HepG2 (cell line): ENCODE measurements at regions of chr1 and their contacts with region 1.

Region 1: DNA sequence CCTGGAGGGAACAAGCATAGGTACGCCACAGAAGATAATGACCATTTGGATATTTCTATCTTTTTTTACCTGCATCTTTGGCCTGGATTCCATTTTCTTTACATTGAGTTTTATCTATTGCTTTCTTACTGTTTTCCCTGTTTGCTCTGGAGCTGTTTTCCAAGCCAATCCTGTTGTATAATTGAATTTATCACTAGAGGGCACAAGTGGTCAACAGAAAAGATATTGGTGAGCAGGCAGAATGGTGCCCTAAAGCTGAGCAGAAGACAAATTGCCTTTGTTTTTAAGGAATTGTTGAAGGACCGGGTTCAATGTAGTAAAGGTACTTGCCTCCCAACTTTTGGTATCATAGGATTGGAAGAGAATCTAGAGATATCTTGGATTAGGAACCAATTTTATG is 152.8 kb downstream of the PPP1R12B start:
- DNase-seq: peak; percentile 31
- ATAC-seq: peak; percentile 71
- H3K4me3 ChIP-seq: no peak overlapping the region
- H3K27ac ChIP-seq: no peak overlapping the region
- H3K4me1 ChIP-seq: no peaks in the 10 kb centered on the region
- H3K27me3 ChIP-seq: no peaks in the 10 kb centered on the region
- CTCF ChIP-seq: peak; percentile 68
- EP300 ChIP-seq: no peak
- POLR2A ChIP-seq: no peak
- RAD21 ChIP-seq: peak; percentile 44; the same call in 1 of the 2 replicates

Region 2: DNA sequence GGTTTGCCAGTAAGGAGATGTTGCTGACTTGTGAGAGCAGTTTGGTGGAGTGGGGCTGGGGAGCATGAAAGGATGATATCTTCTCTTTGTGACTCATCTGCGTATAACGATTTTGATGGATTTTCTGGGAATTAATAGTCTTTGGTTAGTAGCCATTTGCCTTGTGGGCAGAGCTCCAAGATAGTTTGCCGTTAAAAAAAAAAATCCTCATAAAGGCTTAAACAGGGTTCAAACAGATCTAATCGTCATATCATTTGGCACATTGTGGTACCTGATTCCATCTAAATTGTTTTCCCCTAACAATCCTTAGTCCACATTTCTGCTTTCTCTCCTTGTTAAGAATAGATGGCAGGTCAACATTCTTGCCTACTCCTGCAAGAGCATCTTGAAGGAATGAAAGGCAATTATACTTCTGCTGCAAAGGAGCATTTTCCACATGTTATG is 15.2 kb after region 1 on chr1:
- CTCF ChIA-PET with region 1: no interaction called
- POLR2A ChIA-PET with region 1: no interaction called
- in situ Hi-C with region 1: no loop called
- intact Hi-C with region 1: no loop called
- DNase-seq: no peak
- ATAC-seq: no peak
- H3K4me3 ChIP-seq: no peak overlapping the region
- H3K27ac ChIP-seq: no peak overlapping the region
- H3K4me1 ChIP-seq: peaks cover 10% of the 10 kb centered on the region
- H3K27me3 ChIP-seq: no peaks in the 10 kb centered on the region
- CTCF ChIP-seq: no peak
- EP300 ChIP-seq: no peak
- POLR2A ChIP-seq: no peak
- RAD21 ChIP-seq: no peak

Region 3: GRCh38 chr1:202531472-202531811 is 30.2 kb after region 1 on chr1:
- CTCF ChIA-PET with region 1: no interaction called
- POLR2A ChIA-PET with region 1: no interaction called
- in situ Hi-C with region 1: no loop called
- intact Hi-C with region 1: no loop called
- DNase-seq: no peak
- ATAC-seq: no peak
- H3K4me3 ChIP-seq: no peak overlapping the region
- H3K27ac ChIP-seq: no peak overlapping the region
- H3K4me1 ChIP-seq: no peaks in the 10 kb centered on the region
- H3K27me3 ChIP-seq: no peaks in the 10 kb centered on the region
- CTCF ChIP-seq: no peak
- EP300 ChIP-seq: no peak
- POLR2A ChIP-seq: no peak
- RAD21 ChIP-seq: no peak

Region 4: DNA sequence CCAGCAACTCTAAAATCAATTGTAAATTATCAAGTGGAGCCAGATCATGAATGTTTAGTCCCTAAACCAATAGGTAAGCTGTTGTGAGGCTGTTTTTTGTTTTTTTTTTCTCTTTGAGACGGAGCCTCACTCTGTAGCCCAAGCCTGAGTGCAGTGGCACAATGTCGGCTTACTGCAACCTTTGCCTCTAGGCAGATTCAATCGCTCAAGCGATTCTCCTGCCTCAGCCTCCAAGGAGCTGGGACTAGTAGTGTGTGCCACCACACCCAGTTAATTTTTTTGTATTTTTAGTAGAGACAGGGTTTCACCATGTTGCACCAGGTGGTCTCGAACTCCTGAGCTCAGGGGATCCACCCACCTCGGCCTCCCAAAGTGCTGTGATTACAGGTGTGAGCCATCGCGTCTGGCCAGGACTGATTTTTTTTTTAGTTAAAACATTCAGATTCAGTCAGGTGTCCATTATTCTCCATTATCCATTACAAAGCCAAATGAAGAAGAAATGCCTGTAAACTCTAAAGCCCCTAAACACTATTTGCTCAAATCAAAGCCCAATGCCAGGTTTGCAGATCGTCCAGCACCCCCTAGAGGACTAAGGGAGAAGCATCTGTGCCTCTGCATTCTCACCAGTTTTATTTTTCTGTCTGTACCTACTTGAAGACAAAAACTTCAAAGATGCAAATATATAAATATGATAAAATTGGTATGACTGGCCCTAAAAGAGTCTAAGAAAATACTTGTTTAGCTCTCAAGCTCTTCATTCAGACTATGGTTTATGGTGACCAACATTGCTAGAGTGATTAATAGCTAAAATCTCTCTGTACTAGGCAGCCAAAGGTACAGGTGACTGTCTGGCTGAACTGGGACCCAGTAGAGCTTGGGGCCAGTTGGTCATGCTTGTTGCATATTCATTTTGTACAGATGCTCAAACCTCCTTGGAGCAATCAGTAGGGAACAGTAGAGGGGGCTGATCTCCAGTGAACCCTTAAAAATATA is 70.4 kb after region 1 on chr1:
- CTCF ChIA-PET with region 1: interaction called, 11 read pairs
- POLR2A ChIA-PET with region 1: no interaction called
- in situ Hi-C with region 1: no loop called
- intact Hi-C with region 1: loop called (anchors 1 kb)
- DNase-seq: peak; percentile 26
- ATAC-seq: peak; percentile 69
- H3K4me3 ChIP-seq: no peak overlapping the region
- H3K27ac ChIP-seq: no peak overlapping the region
- H3K4me1 ChIP-seq: peaks cover 5% of the 10 kb centered on the region
- H3K27me3 ChIP-seq: no peaks in the 10 kb centered on the region
- CTCF ChIP-seq: peak; percentile 72
- EP300 ChIP-seq: no peak
- POLR2A ChIP-seq: no peak
- RAD21 ChIP-seq: peak; percentile 24; the same call in 1 of the 2 replicates

Region 5: DNA sequence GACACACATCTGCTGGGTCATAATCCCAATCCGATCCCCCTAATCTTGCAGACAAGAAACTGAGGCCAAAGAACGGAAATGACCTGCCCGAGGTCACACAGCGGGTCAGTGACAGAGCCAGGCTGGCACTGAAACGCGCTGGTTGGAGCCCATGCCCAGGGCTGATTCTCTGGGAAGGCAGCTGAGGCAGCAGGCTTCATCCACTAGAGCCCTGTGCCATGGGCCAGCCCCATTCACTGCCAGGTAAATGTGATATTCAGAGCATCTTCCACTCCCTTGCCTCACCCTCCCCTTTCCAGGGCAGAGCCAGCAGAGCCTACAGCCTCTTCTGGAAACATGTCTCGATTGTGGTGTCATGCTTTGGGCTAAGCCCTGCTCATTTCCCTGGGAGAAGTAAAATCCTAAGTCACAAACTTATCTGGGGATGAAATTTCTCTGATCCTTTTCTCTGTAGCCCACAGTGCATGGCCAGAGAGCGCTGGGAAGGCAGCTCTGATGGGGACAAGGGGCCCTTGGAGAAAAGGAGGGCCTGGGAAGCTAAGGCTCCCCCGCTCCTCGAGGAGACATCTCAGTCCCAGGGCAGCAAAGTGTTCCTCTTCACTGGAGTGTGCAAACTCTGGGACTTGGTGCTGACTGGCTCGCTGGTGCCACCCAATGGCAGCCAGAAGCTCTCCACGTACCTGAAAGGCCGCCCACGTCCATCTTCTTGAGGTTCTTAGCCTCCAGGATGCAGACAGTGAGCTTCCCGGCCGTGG is 98.6 kb after region 1 on chr1:
- CTCF ChIA-PET with region 1: interaction called, 12 read pairs
- POLR2A ChIA-PET with region 1: no interaction called
- in situ Hi-C with region 1: loop called (anchors 10 kb)
- intact Hi-C with region 1: loop called (anchors 1 kb)
- DNase-seq: peak; percentile 49
- ATAC-seq: peak; percentile 93
- H3K4me3 ChIP-seq: no peak overlapping the region
- H3K27ac ChIP-seq: no peak overlapping the region
- H3K4me1 ChIP-seq: no peaks in the 10 kb centered on the region
- H3K27me3 ChIP-seq: no peaks in the 10 kb centered on the region
- CTCF ChIP-seq: peak; percentile 86
- EP300 ChIP-seq: no peak
- POLR2A ChIP-seq: no peak
- RAD21 ChIP-seq: peak; percentile 79